PC-9 (cell line): ENCODE measurements at regions of chr10 and their contacts with region 1.

Region 1: GRCh38 chr10:97553575-97554031 is 19.0 kb upstream of the ANKRD2 start:
- DNase-seq: peak in 1 of 2 experiments; percentile 42
- H3K4me3 ChIP-seq: no peak overlapping the region
- H3K27ac ChIP-seq: no peak overlapping the region
- H3K4me1 ChIP-seq: no peaks in the 10 kb centered on the region
- H3K27me3 ChIP-seq: no peaks in the 10 kb centered on the region
- CTCF ChIP-seq: peak; percentile 61

Region 2: DNA sequence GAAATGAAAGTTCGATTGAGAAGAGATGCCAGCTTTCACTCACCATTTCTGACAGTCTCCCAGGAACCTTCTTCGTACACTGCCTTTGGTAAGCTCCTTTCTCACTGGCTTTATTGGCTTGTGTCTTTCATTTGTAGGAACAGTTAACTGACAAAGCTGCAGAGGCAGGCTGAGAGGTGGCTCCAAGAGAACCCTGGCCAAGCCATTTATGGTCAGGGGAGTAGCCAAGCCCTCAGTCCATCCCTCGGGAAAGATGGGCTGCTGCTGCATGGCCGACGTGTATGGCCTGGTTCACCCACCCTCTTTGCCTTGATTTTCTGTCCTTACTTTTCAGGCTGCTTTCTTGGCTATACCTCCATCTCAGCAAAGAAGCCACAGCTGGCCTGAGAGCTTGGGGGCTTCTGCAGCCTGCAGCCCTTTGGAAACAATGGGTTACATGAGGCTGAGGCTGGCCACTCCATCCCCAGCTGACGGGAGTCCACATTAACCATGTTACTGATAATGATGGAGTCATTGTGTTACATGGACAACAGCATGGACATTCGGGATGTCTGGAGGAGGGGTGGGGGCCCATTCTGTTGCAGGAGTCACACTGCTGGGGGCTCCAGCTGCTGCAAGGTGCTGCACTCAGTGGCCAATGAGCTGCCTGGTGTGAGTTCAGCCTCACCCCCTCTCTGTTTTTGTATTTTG is 1194.6 kb before region 1 on chr10 and contains the start of gene OPALIN:
- CTCF ChIA-PET with region 1: no interaction called
- POLR2A ChIA-PET with region 1: no interaction called
- intact Hi-C with region 1: no loop called
- DNase-seq: no peak
- H3K4me3 ChIP-seq: no peak within 1 kb of the TSS
- H3K27ac ChIP-seq: no peak within 1 kb of the TSS
- H3K4me1 ChIP-seq: no peaks in the 10 kb centered on the region
- H3K27me3 ChIP-seq: no peaks in the 10 kb centered on the region
- CTCF ChIP-seq: no peak
- total RNA-seq, gene OPALIN: not detected in 2 replicates

Region 3: DNA sequence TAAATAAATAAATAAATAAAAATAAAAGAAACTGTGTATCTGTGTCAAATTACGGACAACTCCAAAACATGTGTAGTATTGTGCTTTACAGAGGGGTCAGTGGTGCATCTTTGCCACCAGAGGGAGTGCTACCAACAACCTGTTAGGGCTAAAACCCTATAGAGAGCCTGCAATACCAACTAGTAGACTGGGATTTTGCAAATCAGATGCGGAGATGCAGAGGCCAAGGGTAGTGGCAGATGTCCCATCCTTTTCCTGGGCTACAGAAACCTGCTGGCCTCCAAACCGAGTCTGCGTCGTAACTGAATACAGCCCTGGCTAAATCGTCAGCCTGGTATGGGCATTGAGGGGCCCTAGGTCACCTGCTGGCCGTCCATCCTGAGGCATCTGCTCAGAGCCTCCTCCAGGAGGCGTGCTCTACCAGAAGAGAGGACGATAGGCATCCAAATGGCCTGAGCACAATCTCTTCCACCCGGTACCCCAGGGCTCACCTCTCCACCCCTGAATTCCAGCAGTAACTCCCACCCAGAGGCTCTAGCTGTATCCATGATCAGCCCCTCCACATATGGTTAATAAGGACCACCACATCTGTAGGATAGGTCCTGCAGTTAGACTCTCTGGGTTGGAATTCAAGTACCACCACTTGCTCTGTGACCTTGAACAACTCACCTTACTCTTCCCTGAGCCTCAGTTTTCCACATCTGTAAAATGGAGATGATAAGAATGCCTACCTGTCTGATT is 146.2 kb before region 1 on chr10:
- CTCF ChIA-PET with region 1: no interaction called
- POLR2A ChIA-PET with region 1: no interaction called
- intact Hi-C with region 1: no loop called
- DNase-seq: peak; percentile 34 to 48
- H3K4me3 ChIP-seq: no peak overlapping the region
- H3K27ac ChIP-seq: no peak overlapping the region
- H3K4me1 ChIP-seq: peaks cover 17% of the 10 kb centered on the region
- H3K27me3 ChIP-seq: no peaks in the 10 kb centered on the region
- CTCF ChIP-seq: peak; percentile 67

Region 4: GRCh38 chr10:97584060-97584797 is 30.6 kb after region 1 on chr10 and contains the start of gene HOGA1:
- CTCF ChIA-PET with region 1: no interaction called
- POLR2A ChIA-PET with region 1: no interaction called
- intact Hi-C with region 1: no loop called
- DNase-seq: peak in 1 of 2 experiments; percentile 67
- H3K4me3 ChIP-seq: no peak within 1 kb of the TSS
- H3K27ac ChIP-seq: no peak within 1 kb of the TSS
- H3K4me1 ChIP-seq: no peaks in the 10 kb centered on the region
- H3K27me3 ChIP-seq: no peaks in the 10 kb centered on the region
- CTCF ChIP-seq: no peak
- total RNA-seq, gene HOGA1: 3.4 and 4.4 TPM in 2 replicates

Region 5: GRCh38 chr10:97612386-97612785 is 58.8 kb after region 1 on chr10:
- CTCF ChIA-PET with region 1: no interaction called
- POLR2A ChIA-PET with region 1: no interaction called
- intact Hi-C with region 1: loop called (anchors 10 kb)
- DNase-seq: peak; percentile 10 to 51
- H3K4me3 ChIP-seq: no peak overlapping the region
- H3K27ac ChIP-seq: no peak overlapping the region
- H3K4me1 ChIP-seq: no peaks in the 10 kb centered on the region
- H3K27me3 ChIP-seq: no peaks in the 10 kb centered on the region
- CTCF ChIP-seq: peak; percentile 67